Activated naive CD8-positive, alpha-beta T cell treated with anti-CD3 and anti-CD28 coated beads, Interleukin-2, amount 10 ng/mL, durations not matched to agents 7 days and 5 days (primary cell): ENCODE measurements at regions of chr17 and their contacts with region 1.

Region 1: GRCh38 chr17:3738562-3739295 is 15.0 kb downstream of the HASPIN start:
- DNase-seq: no peak
- ATAC-seq: peak; percentile 75
- H3K4me3 Mint-ChIP-seq: no peak overlapping the region
- H3K27ac Mint-ChIP-seq: peak overlapping the region; percentile 49
- H3K4me1 Mint-ChIP-seq: peaks cover 34% of the 10 kb centered on the region
- H3K27me3 Mint-ChIP-seq: peaks cover 5% of the 10 kb centered on the region

Region 2: DNA sequence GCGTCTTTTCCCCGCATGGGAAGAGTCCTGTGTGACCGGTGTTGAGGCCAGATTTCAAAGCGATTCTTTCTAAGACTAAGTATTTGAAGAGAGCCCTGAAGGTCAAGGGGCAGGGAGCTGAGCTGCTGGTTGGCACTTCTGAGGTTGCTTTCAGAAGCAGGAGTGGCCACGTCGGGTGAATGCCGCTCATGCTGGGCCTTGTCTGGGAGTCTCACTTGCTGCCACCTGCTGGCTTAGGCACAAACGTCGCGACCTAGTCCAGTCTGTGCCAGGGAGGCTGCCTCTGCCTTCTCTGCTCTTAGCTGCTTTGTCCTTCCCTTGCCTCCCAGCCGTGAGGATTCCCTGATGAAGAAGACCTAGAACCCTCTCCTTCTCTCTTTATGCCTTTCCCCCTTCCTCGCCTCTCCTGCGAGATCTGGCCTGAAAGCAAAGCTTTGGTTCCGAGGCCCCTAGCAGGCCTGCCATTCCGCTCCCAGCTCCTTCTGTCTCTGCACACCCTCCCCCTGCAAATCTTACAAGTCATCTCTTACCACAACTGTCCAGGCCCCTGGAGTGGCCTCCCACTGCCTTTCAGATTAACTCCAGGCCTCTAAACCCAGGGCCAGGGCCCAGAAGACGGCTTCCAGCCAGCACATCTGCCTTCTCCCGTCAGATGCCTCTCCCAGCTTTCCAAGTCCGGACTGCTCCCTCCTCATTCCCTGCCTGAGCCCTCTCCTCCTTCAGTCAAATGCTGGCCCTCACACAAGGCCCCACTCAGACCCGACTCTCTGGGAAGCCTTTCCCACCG is 90.8 kb before region 1 on chr17:
- POLR2A ChIA-PET with region 1: no interaction called
- DNase-seq: peak; percentile 53
- ATAC-seq: peak; percentile 74
- H3K4me3 Mint-ChIP-seq: no peak overlapping the region
- H3K27ac Mint-ChIP-seq: no peak overlapping the region
- H3K4me1 Mint-ChIP-seq: peaks cover 6% of the 10 kb centered on the region
- H3K27me3 Mint-ChIP-seq: no peaks in the 10 kb centered on the region

Region 3: DNA sequence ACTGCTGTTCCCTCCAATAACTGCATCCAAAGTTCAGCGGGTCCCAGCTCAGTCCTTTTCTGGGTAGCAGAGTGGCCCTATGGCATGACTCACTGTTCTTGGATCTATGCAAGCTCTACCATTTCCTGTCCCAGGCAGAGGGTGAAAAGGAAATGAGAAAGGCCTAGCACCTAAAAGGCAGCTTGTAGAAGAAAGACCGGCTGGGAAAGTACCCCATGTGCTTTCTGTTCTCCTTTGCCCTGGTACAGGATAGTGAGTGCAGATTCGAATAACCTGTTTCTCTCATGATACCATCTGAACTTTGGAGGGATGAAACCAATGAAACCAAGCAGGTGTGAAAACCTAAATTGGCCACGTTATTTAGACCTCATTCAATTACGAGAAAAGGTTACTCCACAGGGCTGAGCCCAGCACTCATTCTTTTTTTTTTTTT is 27.8 kb before region 1 on chr17:
- POLR2A ChIA-PET with region 1: no interaction called
- DNase-seq: peak; percentile 45
- ATAC-seq: peak; percentile 99
- H3K4me3 Mint-ChIP-seq: peak overlapping the region; percentile 68
- H3K27ac Mint-ChIP-seq: peak overlapping the region; percentile 90
- H3K4me1 Mint-ChIP-seq: peaks cover 40% of the 10 kb centered on the region
- H3K27me3 Mint-ChIP-seq: no peaks in the 10 kb centered on the region

Region 4: DNA sequence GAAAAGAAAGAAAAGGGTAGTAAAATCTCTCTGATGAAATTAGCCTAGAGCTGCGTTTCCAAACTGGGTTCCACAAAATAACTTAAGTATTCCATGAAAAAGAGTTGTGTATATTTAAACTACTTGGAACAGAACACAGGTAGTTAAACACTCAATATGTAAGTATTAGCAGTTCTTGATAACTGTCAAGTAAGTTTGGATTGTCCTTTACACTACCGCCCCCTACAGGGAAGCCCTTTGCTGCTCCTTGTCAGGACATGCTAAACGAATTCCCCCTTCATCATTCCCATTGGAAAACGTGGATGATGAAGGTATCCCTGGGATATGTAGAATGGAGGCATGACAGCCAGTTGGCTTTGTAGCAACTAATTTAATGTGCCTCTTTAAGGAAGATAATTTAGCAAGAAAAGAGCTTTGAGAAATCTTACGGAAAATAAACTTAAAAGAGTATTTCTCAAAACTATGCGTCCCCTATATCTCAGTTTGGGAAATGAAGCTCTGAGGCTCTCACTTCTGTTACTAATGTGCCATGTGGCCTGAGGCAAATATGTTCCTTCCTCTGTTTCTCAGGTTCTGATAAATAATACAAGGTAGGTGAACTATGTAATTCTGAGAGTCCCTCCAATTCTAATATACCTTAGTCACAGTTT is 88.5 kb after region 1 on chr17:
- POLR2A ChIA-PET with region 1: interaction called, 10 read pairs
- DNase-seq: peak; percentile 44
- ATAC-seq: peak; percentile 52
- H3K4me3 Mint-ChIP-seq: no peak overlapping the region
- H3K27ac Mint-ChIP-seq: no peak overlapping the region
- H3K4me1 Mint-ChIP-seq: peaks cover 9% of the 10 kb centered on the region
- H3K27me3 Mint-ChIP-seq: no peaks in the 10 kb centered on the region